Mammary epithelial cell (primary cell): ENCODE measurements at regions of chr7 and their contacts with region 1.

Region 1: DNA sequence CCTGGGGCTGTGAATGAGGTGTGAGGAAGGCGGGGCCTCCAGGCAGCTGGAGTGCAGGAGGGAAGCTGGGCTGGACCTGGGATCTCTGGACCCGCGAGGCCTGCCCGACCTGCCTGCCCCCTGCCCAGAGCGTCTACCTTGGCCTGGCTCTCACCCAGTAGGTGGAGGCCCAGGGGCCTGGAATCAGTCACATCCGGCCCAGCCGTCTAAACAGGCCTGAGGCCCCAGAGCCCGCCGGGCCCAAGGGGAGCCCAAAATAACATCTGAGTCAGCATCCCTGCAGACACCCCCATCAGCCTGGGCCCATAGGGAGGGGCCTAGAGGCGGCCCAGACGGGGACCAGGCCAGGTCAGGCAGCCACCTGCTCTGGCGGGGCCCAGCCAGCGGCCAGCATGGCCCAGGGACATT is 15.1 kb upstream of the ELN start:
- DNase-seq: peak; percentile 48
- H3K4me3 ChIP-seq: no peak overlapping the region
- H3K27ac ChIP-seq: no peak overlapping the region
- H3K4me1 ChIP-seq: peaks cover 9% of the 10 kb centered on the region
- H3K27me3 ChIP-seq: no peaks in the 10 kb centered on the region
- CTCF ChIP-seq: no peak

Region 2: DNA sequence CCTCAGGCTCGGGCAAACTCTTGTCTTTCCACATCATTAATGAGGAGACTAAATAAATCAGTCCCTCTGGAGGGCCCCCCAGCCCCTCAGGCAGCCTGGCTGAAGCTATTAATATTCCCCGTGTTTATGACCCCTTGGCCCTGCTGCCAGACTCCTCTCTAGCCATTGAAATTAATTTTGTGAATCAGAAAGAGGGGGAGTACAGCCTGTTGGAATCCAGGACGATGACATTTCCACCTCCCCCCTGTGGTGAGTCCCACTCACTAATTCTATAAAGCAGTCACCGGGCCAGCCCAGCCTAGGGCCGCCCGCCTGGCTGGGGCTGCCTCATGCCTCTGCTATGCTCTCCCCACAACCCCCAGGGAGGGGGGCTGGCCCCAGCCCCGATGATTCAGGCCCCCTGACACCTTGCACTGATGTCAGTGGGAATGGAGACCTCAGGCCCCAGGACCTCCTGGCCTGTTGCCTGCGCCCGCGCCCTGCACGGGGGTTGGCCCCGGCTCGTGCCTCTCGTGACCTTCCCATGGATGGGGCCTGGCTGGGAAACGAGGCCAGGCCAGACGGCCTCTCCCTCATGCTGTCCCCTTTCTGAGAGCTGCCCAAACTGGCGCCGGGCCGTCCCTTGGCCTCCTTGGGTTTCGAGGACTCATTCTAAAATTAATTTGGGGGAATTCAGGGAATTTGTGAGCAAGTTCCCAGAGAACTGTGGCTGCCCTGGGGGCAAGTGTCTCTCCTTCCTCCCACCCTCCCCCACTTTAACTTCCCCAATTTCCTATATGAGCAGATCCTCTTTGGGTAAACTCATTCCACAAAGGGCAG is 117.9 kb before region 1 on chr7:
- CTCF ChIA-PET with region 1: no interaction called
- dilution Hi-C with region 1: loop called (anchors 5 kb)
- in situ Hi-C with region 1: no loop called
- intact Hi-C with region 1: loop called (anchors 10 kb)
- DNase-seq: peak; percentile 51
- H3K4me3 ChIP-seq: no peak overlapping the region
- H3K27ac ChIP-seq: no peak overlapping the region
- H3K4me1 ChIP-seq: peaks cover 6% of the 10 kb centered on the region
- H3K27me3 ChIP-seq: peaks cover 5% of the 10 kb centered on the region
- CTCF ChIP-seq: no peak

Region 3: DNA sequence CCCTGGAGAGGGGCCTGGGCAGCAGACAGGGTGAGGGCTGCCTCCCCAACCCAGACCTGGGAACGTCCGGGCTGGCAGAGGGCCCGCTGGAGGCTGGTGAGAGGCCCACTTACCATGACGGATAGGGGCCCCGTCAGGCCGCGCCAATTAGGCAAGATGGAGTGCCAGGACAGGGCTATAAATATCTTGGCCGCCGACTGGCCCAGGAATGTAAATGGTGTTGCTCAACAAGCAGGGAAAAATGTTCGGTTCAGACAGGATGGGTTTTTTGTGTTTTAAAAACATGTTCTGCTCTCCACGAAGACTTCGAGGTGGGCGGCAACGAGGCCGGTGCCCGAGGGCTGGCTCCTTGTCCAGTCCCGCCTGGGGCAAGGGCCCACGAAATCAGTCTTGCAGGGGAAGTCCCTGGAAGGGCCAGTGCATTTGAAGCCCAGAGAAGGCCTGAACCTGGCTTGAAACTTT is 20.7 kb before region 1 on chr7:
- CTCF ChIA-PET with region 1: no interaction called
- dilution Hi-C with region 1: no loop called
- in situ Hi-C with region 1: no loop called
- intact Hi-C with region 1: no loop called
- DNase-seq: no peak
- H3K4me3 ChIP-seq: no peak overlapping the region
- H3K27ac ChIP-seq: no peak overlapping the region
- H3K4me1 ChIP-seq: peaks cover 15% of the 10 kb centered on the region
- H3K27me3 ChIP-seq: no peaks in the 10 kb centered on the region
- CTCF ChIP-seq: no peak